GM10248 (cell line): ENCODE measurements at regions of chr3 and their contacts with region 1.

Region 1: GRCh38 chr3:82311901-82312300 is 550.5 kb upstream of the GBE1 start:
- DNase-seq: no peak
- CTCF ChIP-seq: no peak

Region 2: DNA sequence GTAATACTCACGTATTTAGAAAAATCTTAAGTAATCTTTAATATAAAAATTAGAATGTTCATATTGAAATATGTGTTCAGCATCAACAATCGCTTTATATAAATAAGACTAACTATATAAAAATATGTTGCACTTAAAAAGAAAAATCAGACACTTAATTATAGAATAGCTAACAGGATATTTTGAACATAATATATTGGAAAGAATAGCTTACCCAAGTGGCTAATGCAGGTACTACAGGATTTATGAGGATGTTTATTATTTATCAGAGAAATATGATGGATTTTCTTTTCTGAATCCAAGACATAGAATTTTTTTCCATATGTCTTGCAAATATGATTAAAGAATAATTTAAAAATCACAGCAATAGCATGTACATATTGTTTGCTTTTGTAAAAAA is 17.4 kb after region 1 on chr3:
- CTCF ChIA-PET with region 1: interaction called, 17 read pairs
- POLR2A ChIA-PET with region 1: no interaction called
- DNase-seq: no peak
- CTCF ChIP-seq: no peak

Region 3: GRCh38 chr3:83122774-83123350 is 811.0 kb after region 1 on chr3:
- CTCF ChIA-PET with region 1: no interaction called
- POLR2A ChIA-PET with region 1: no interaction called
- DNase-seq: no peak
- CTCF ChIP-seq: no peak